CD4-positive, alpha-beta T cell (primary cell): ENCODE measurements at regions of chr16 and their contacts with region 1.

Region 1: GRCh38 chr16:30417529-30418349 is 10.3 kb downstream of the ZNF771 start:
- DNase-seq: peak; percentile 77 to 98 (median 88)
- ATAC-seq: peak; percentile 85
- H3K4me3 ChIP-seq: peak overlapping the region; percentile 53
- H3K4me3 Mint-ChIP-seq: peak overlapping the region; percentile 80
- H3K27ac ChIP-seq: peak overlapping the region; percentile 73
- H3K27ac Mint-ChIP-seq: peak overlapping the region; percentile 86
- H3K4me1 ChIP-seq: peaks cover 16% of the 10 kb centered on the region
- H3K4me1 Mint-ChIP-seq: peaks cover 21% of the 10 kb centered on the region
- H3K27me3 ChIP-seq: no peaks in the 10 kb centered on the region
- H3K27me3 Mint-ChIP-seq: no peaks in the 10 kb centered on the region
- CTCF ChIP-seq: no peak

Region 2: GRCh38 chr16:29290631-29291247 is 1127.0 kb before region 1 on chr16:
- CTCF ChIA-PET with region 1: no interaction called
- POLR2A ChIA-PET with region 1: no interaction called
- intact Hi-C with region 1: no loop called
- DNase-seq: peak; percentile 11 to 88 (median 42)
- ATAC-seq: peak; percentile 79
- H3K4me3 ChIP-seq: peak overlapping the region; percentile 24
- H3K4me3 Mint-ChIP-seq: peak overlapping the region; percentile 30
- H3K27ac ChIP-seq: no peak overlapping the region
- H3K27ac Mint-ChIP-seq: no peak overlapping the region
- H3K4me1 ChIP-seq: peaks cover 17% of the 10 kb centered on the region
- H3K4me1 Mint-ChIP-seq: no peaks in the 10 kb centered on the region
- H3K27me3 ChIP-seq: no peaks in the 10 kb centered on the region
- H3K27me3 Mint-ChIP-seq: no peaks in the 10 kb centered on the region
- CTCF ChIP-seq: no peak

Region 3: DNA sequence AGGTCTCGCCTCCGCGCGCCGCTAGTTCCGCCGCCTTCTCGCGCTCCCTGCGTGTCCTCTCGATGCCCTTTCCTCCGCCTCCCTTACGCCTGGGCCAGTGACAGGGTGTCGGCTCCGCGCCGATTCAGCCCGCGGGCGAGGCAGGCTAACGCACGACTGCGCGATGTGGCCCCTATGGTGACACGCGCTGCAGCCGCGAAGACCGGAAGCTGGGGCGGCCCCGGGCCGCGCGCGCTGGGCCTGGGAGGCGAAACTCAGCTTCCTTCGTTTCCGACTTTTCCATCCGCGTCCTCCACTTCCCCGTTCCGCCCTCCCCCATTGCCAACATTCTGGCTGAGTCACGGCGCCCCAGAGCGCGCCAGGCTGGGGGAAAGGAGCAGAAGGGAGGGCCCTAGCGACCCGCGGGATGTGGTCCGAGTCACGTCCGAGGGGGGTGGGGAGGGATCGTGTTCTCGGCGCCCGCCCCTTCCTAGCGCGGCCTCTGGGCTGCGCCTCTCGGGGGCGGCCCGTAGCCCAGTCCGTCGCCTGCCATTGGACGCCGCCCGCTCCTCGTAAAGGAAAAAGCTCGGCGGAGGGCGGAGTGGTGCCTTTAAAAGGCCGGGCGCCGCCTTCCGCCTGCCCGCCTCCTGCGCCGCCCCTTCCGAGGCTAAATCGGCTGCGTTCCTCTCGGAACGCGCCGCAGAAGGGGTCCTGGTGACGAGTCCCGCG is 352.4 kb before region 1 on chr16 and contains the start of gene ALDOA:
- CTCF ChIA-PET with region 1: no interaction called
- POLR2A ChIA-PET with region 1: interaction called, 17 read pairs
- intact Hi-C with region 1: loop called in 1 of 2 experiments (anchors 10 kb)
- DNase-seq: peak; percentile 85 to 97 (median 93)
- ATAC-seq: peak; percentile 80
- H3K4me3 ChIP-seq: peak within 1 kb of the TSS; percentile 100
- H3K4me3 Mint-ChIP-seq: peak within 1 kb of the TSS; percentile 100
- H3K27ac ChIP-seq: peak within 1 kb of the TSS; percentile 87 to 92
- H3K27ac Mint-ChIP-seq: peak within 1 kb of the TSS; percentile 96
- H3K4me1 ChIP-seq: peaks cover 60% of the 10 kb centered on the region
- H3K4me1 Mint-ChIP-seq: peaks cover 44% of the 10 kb centered on the region
- H3K27me3 ChIP-seq: no peaks in the 10 kb centered on the region
- H3K27me3 Mint-ChIP-seq: no peaks in the 10 kb centered on the region
- CTCF ChIP-seq: no peak
- total RNA-seq, gene ALDOA: 390 to 396 TPM

Region 4: DNA sequence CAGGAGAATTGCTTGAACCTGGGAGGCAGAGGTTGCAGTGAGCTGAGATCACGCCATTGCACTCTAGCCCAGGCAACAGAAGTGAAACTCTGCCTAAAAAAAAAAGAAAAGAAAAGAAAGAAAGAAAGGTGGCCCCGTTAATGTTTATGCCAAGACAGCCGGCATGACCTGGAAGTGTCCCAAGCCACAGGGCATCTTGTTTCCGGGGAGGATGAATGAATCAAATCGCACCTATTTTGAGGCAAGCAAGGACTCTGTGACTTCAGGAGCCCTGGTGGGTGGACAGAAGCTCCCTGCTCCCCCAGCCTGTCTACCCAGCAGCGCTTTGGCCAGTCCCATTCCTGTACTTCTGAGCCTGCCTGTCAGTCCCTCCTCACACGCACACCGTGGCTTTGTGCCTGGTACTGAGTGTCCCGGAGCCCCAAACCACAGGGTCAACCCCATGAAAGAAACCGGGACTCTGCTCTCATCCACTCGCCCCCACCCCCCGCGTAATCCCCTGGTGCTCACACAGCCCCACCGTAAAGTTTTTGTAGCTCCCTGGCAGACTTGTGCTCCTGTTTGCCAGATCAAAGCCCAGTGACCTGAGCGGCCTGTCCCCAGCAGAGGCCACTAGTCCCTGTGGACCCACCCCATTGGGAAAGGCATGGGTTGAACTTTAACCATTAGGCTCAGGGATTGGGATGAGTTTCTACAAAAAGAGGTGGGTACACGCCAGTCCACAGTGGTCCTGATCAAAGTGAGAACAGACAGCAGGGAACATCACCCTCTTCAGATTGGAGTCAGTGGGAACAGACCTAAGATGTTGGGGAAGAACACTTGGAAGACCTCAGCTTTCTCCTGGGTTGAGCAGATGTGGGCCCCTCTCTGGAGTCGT is 81.9 kb before region 1 on chr16:
- CTCF ChIA-PET with region 1: no interaction called
- POLR2A ChIA-PET with region 1: interaction called, 17 read pairs
- intact Hi-C with region 1: no loop called
- DNase-seq: peak in 4 of 14 experiments; percentile 36 to 67 (median 56)
- ATAC-seq: no peak
- H3K4me3 ChIP-seq: peak overlapping the region; percentile 58
- H3K4me3 Mint-ChIP-seq: peak overlapping the region; percentile 87
- H3K27ac ChIP-seq: peak overlapping the region in 1 of 2 donors; percentile 37
- H3K27ac Mint-ChIP-seq: peak overlapping the region; percentile 90
- H3K4me1 ChIP-seq: peaks cover 17% of the 10 kb centered on the region
- H3K4me1 Mint-ChIP-seq: peaks cover 20% of the 10 kb centered on the region
- H3K27me3 ChIP-seq: no peaks in the 10 kb centered on the region
- H3K27me3 Mint-ChIP-seq: no peaks in the 10 kb centered on the region
- CTCF ChIP-seq: no peak

Region 5: GRCh38 chr16:30395155-30395991 is 22.4 kb before region 1 on chr16 and contains the start of gene ZNF48:
- CTCF ChIA-PET with region 1: interaction called, 3 read pairs
- POLR2A ChIA-PET with region 1: interaction called, 17 read pairs
- intact Hi-C with region 1: no loop called
- DNase-seq: peak in 11 of 14 experiments; percentile 45 to 80 (median 56)
- ATAC-seq: peak; percentile 64
- H3K4me3 ChIP-seq: peak within 1 kb of the TSS; percentile 86
- H3K4me3 Mint-ChIP-seq: peak within 1 kb of the TSS; percentile 90
- H3K27ac ChIP-seq: peak within 1 kb of the TSS; percentile 34 to 56
- H3K27ac Mint-ChIP-seq: peak within 1 kb of the TSS; percentile 57
- H3K4me1 ChIP-seq: peaks cover 46% of the 10 kb centered on the region
- H3K4me1 Mint-ChIP-seq: peaks cover 42% of the 10 kb centered on the region
- H3K27me3 ChIP-seq: no peaks in the 10 kb centered on the region
- H3K27me3 Mint-ChIP-seq: no peaks in the 10 kb centered on the region
- CTCF ChIP-seq: no peak
- total RNA-seq, gene ZNF48: 3.4 to 3.5 TPM

Region 6: DNA sequence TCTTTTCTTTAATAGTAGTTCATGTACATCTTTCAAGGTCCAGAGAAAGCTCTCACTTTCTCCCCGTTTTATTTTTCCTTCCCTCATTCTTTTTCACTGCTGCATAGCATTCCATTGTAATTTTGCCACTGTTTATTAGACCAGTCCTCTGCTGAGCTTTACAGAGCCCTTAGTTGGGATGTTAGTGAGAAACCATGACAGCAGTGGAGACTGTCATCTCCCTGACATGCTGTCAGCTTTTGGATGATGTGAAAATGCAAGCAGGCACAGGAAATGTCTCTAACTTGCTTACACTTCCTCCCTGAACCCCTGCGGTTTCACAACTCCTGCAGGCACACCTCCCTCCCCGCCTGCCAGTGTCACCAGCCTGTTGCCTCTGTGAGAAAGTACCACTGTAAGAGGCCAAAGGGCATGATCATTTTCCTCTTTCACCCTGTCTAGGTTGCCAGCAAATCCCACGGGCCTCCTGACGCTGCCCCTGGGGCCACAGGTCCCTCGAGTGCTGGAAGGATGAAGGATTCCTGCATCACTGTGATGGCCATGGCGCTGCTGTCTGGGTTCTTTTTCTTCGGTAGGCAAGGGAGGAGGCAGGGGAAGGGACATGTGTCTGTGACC is 54.7 kb after region 1 on chr16 and contains the start of gene ITGAL:
- CTCF ChIA-PET with region 1: no interaction called
- POLR2A ChIA-PET with region 1: interaction called, 21 read pairs
- intact Hi-C with region 1: no loop called
- DNase-seq: peak; percentile 63 to 96 (median 80)
- ATAC-seq: peak; percentile 83
- H3K4me3 ChIP-seq: peak within 1 kb of the TSS; percentile 83
- H3K4me3 Mint-ChIP-seq: peak within 1 kb of the TSS; percentile 96
- H3K27ac ChIP-seq: peak within 1 kb of the TSS; percentile 75 to 94
- H3K27ac Mint-ChIP-seq: peak within 1 kb of the TSS; percentile 90
- H3K4me1 ChIP-seq: peaks cover 81% of the 10 kb centered on the region
- H3K4me1 Mint-ChIP-seq: peaks cover 70% of the 10 kb centered on the region
- H3K27me3 ChIP-seq: no peaks in the 10 kb centered on the region
- H3K27me3 Mint-ChIP-seq: no peaks in the 10 kb centered on the region
- CTCF ChIP-seq: no peak
- total RNA-seq, gene ITGAL: 186 to 187 TPM

Region 7: DNA sequence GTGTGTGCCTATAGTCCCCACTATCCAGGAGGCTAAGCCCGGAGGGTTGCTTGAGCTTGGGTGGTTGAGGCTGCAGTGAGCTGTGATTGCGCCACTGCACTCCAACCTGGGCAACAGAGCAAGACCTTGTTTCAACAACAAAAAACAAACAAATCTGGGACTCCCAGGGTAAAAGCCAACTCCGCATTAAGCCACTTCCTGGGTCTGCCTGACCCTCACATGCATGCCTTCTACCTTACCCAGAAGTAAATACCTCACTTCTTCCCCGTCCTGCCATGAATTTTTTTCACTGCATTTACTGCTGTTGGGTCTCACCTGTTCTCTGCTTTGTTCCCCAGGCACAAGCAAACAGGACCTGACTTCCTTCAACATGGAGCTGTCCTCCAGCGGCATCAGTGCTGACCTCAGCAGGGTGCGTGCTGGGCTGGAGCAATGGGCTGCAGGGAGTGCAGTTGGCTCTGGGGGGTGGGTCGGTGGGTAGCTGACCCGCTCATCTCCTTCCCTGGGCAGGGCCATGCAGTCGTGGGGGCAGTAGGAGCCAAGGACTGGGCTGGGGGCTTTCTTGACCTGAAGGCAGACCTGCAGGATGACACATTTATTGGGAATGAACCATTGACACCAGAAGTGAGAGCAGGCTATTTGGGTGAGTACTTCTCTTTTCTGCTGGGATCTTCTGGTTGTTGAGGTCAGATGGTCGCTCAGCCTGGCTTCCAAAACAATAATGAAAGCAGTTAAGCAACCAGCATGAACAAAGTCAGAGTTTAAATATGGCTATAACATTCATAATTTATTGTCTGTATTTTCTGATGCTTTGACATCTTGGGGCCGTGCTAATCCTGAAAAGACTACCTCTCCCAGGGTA is 71.2 kb after region 1 on chr16:
- CTCF ChIA-PET with region 1: no interaction called
- POLR2A ChIA-PET with region 1: no interaction called
- intact Hi-C with region 1: no loop called
- DNase-seq: no peak
- ATAC-seq: no peak
- H3K4me3 ChIP-seq: no peak overlapping the region
- H3K4me3 Mint-ChIP-seq: no peak overlapping the region
- H3K27ac ChIP-seq: peak overlapping the region in 1 of 2 donors; percentile 15
- H3K27ac Mint-ChIP-seq: peak overlapping the region; percentile 33
- H3K4me1 ChIP-seq: peaks cover 21% of the 10 kb centered on the region
- H3K4me1 Mint-ChIP-seq: peaks cover 23% of the 10 kb centered on the region
- H3K27me3 ChIP-seq: no peaks in the 10 kb centered on the region
- H3K27me3 Mint-ChIP-seq: no peaks in the 10 kb centered on the region
- CTCF ChIP-seq: no peak

Region 8: GRCh38 chr16:30571695-30572600 is 154.2 kb after region 1 on chr16 and contains the start of gene ZNF688:
- CTCF ChIA-PET with region 1: no interaction called
- POLR2A ChIA-PET with region 1: interaction called, 22 read pairs
- intact Hi-C with region 1: no loop called
- DNase-seq: peak; percentile 87 to 99 (median 92)
- ATAC-seq: peak; percentile 79
- H3K4me3 ChIP-seq: peak within 1 kb of the TSS; percentile 94
- H3K4me3 Mint-ChIP-seq: peak within 1 kb of the TSS; percentile 98
- H3K27ac ChIP-seq: peak within 1 kb of the TSS; percentile 90 to 96
- H3K27ac Mint-ChIP-seq: peak within 1 kb of the TSS; percentile 97
- H3K4me1 ChIP-seq: peaks cover 51% of the 10 kb centered on the region
- H3K4me1 Mint-ChIP-seq: peaks cover 42% of the 10 kb centered on the region
- H3K27me3 ChIP-seq: no peaks in the 10 kb centered on the region
- H3K27me3 Mint-ChIP-seq: no peaks in the 10 kb centered on the region
- CTCF ChIP-seq: no peak
- total RNA-seq, gene ZNF688: 8.8 to 9.6 TPM

Region 9: GRCh38 chr16:30680336-30680735 is 262.6 kb after region 1 on chr16:
- CTCF ChIA-PET with region 1: no interaction called
- POLR2A ChIA-PET with region 1: no interaction called
- intact Hi-C with region 1: no loop called
- DNase-seq: no peak
- ATAC-seq: no peak
- H3K4me3 ChIP-seq: no peak overlapping the region
- H3K4me3 Mint-ChIP-seq: no peak overlapping the region
- H3K27ac ChIP-seq: no peak overlapping the region
- H3K27ac Mint-ChIP-seq: no peak overlapping the region
- H3K4me1 ChIP-seq: no peaks in the 10 kb centered on the region
- H3K4me1 Mint-ChIP-seq: no peaks in the 10 kb centered on the region
- H3K27me3 ChIP-seq: no peaks in the 10 kb centered on the region
- H3K27me3 Mint-ChIP-seq: no peaks in the 10 kb centered on the region
- CTCF ChIP-seq: no peak